ENCODE measurements at regions of chr15 and their contacts with region 1.

Region 1: DNA sequence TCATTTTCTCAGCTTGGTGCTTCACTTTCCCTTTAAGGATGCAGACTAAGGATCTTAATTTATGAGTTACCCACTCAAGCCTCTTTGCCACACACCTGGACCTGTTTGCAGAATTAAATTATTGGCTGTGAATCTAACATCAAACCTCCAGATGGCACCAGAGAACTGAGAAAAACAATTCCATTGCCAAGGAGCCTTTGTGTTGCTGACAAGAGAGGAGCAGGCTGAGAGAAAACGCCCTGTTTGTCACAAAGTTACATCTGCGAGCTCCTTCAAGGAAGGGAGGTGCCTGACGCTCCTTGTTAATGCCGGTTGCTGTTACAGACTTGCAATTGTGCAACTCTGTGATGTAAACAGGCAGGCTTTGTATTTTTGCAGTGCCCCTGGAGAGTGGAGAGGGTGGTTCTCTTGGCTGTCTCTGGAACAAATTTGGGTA is 36.3 kb upstream of the TMC3 start:
- DNase-seq: peak; percentile 24
- ATAC-seq: peak; percentile 86
- H3K4me3 Mint-ChIP-seq: peak overlapping the region; percentile 14; the same call in 1 of the 2 replicates
- H3K27ac Mint-ChIP-seq: peak overlapping the region; percentile 20; the same call in 1 of the 2 replicates
- H3K4me1 Mint-ChIP-seq: peaks cover 8% of the 10 kb centered on the region
- H3K27me3 Mint-ChIP-seq: no peaks in the 10 kb centered on the region; the same call in 1 of the 2 replicates
- CTCF ChIP-seq: no peak

Region 2: DNA sequence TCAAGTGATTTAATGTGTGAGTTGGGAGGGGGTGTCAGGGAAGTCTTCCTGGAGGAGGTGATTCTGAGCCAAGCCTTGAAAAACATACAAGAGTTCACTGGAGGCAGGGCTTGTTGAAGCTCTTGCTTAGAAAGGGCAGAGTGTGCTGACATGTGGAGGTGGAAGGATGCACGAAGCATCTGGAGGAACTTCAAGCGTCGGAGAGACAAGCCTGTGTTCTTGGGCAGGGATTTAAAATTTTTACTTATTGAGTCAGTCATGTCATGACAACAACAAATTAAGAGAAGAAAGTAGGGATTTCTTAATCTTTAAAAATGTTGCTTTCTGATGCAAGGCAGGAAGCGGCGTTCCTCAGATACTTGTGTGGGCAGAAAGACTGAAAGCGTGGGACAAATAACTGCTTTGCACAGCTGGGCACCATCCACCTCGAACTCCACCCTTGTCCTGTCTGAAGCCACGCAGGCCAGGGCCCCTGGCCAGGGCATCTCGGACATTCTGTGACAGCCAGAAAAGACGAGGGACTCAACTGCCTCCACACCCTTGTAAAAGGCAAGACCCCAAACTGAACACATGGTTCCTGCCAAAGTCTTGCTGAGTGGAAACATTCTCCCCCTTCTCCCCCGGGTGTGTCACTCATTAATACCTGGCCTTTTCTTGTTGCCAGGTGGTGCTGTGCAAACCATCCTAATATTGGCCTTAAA is 220.6 kb before region 1 on chr15:
- CTCF ChIA-PET with region 1: no interaction called
- POLR2A ChIA-PET with region 1: no interaction called
- DNase-seq: no peak
- ATAC-seq: no peak
- H3K4me3 Mint-ChIP-seq: no peak overlapping the region
- H3K27ac Mint-ChIP-seq: no peak overlapping the region
- H3K4me1 Mint-ChIP-seq: no peaks in the 10 kb centered on the region
- H3K27me3 Mint-ChIP-seq: no peaks in the 10 kb centered on the region
- CTCF ChIP-seq: no peak

Region 3: GRCh38 chr15:81274931-81275707 is 135.2 kb before region 1 on chr15:
- CTCF ChIA-PET with region 1: interaction called, 38 read pairs
- POLR2A ChIA-PET with region 1: no interaction called
- DNase-seq: peak; percentile 89
- ATAC-seq: peak; percentile 99
- H3K4me3 Mint-ChIP-seq: no peak overlapping the region
- H3K27ac Mint-ChIP-seq: no peak overlapping the region
- H3K4me1 Mint-ChIP-seq: peaks cover 12% of the 10 kb centered on the region
- H3K27me3 Mint-ChIP-seq: peaks cover 5% of the 10 kb centered on the region
- CTCF ChIP-seq: peak; percentile 82

Region 4: GRCh38 chr15:81473177-81473576 is 62.8 kb after region 1 on chr15:
- CTCF ChIA-PET with region 1: interaction called, 10 read pairs
- POLR2A ChIA-PET with region 1: no interaction called
- DNase-seq: no peak
- ATAC-seq: no peak
- H3K4me3 Mint-ChIP-seq: no peak overlapping the region
- H3K27ac Mint-ChIP-seq: no peak overlapping the region
- H3K4me1 Mint-ChIP-seq: peaks cover 4% of the 10 kb centered on the region
- H3K27me3 Mint-ChIP-seq: no peaks in the 10 kb centered on the region
- CTCF ChIP-seq: no peak

Region 5: DNA sequence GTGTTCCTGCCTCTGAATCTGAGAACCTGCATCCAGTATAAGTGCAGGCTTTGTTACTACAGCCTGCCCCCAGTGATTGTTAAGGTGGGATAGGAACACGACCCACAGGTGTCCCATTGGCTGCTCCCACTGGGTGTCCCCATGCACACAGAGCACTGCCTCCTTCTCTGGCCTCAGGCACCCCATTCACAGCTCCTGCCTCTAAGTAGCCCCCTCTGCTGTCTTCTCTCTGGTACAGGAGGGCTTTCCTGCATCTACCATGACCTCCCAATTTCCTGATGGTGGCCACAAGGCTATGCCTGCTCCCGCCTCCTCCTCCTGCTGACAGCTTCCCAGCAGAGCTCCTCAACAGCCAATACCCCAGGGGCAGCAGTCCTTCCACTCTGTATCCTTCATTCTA is 202.3 kb after region 1 on chr15:
- CTCF ChIA-PET with region 1: interaction called, 13 read pairs
- POLR2A ChIA-PET with region 1: no interaction called
- DNase-seq: peak; percentile 40
- ATAC-seq: peak; percentile 99
- H3K4me3 Mint-ChIP-seq: no peak overlapping the region
- H3K27ac Mint-ChIP-seq: no peak overlapping the region
- H3K4me1 Mint-ChIP-seq: peaks cover 23% of the 10 kb centered on the region
- H3K27me3 Mint-ChIP-seq: no peaks in the 10 kb centered on the region
- CTCF ChIP-seq: no peak

Region 6: DNA sequence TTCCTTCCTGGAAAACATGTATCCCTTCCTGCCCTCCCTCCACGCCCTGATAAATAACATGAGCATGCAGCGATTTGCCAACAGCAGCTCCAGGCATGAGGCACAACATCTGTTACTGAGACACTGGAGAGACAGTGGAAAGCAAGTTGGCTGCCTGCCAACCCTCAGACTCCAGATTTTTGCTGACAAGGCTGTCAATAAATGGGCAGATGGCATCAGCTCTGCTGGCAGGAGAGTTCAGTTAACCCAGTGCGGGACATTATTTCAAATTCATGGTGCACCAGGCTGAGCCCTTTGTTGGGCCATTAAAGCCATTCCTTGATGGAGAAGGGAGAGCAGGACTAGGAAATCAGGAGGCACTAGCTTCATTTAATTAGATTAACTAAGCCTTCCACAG is 342.2 kb after region 1 on chr15:
- CTCF ChIA-PET with region 1: interaction called, 12 read pairs
- POLR2A ChIA-PET with region 1: no interaction called
- DNase-seq: no peak
- ATAC-seq: peak; percentile 35; the same call in 1 of the 2 replicates
- H3K4me3 Mint-ChIP-seq: no peak overlapping the region
- H3K27ac Mint-ChIP-seq: peak overlapping the region; percentile 91
- H3K4me1 Mint-ChIP-seq: peaks cover 45% of the 10 kb centered on the region
- H3K27me3 Mint-ChIP-seq: no peaks in the 10 kb centered on the region
- CTCF ChIP-seq: no peak

Region 7: DNA sequence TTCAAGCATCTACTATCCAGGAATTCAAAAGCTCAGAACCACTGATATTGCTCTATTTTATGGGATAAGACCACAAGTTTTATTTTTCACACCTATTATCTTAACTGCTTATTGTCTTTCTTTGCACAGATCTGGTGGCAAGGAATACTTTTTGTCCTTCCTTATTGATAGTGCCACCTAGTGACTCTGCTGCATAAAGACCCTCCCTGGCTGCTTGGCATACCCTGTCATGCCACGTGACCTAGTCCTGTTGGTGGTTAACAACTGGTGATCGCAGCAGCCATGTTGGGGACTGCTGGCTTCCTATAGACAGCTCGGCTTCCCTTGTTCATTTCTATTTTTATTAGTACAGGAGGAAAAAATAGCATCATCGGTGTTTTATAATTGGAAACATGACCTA is 399.2 kb after region 1 on chr15:
- CTCF ChIA-PET with region 1: interaction called, 10 read pairs
- POLR2A ChIA-PET with region 1: no interaction called
- DNase-seq: peak; percentile 41
- ATAC-seq: peak; percentile 83
- H3K4me3 Mint-ChIP-seq: no peak overlapping the region
- H3K27ac Mint-ChIP-seq: peak overlapping the region; percentile 32; the same call in 1 of the 2 replicates
- H3K4me1 Mint-ChIP-seq: peaks cover 9% of the 10 kb centered on the region
- H3K27me3 Mint-ChIP-seq: no peaks in the 10 kb centered on the region; the same call in 1 of the 2 replicates
- CTCF ChIP-seq: no peak

Measured in WTC11 (cell line).